Gastrocnemius medialis (tissue), 4 donors: ENCODE measurements at regions of chr1 and their contacts with region 1.

Region 1: GRCh38 chr1:31564134-31564989 is 12.0 kb upstream of the TINAGL1 start:
- DNase-seq: peak in 1 of 2 donors; percentile 28
- ATAC-seq: peak; percentile 65 to 82
- H3K4me3 ChIP-seq: no peak overlapping the region
- H3K27ac ChIP-seq: no peak overlapping the region
- H3K4me1 ChIP-seq: no peaks in the 10 kb centered on the region
- H3K27me3 ChIP-seq: no peaks in the 10 kb centered on the region
- CTCF ChIP-seq: peak; percentile 86 to 92 (median 89)
- POLR2A ChIP-seq: no peak

Region 2: GRCh38 chr1:30342535-30343141 is 1221.7 kb before region 1 on chr1:
- in situ Hi-C with region 1: no loop called
- intact Hi-C with region 1: no loop called
- DNase-seq: no peak
- ATAC-seq: no peak
- H3K4me3 ChIP-seq: no peak overlapping the region
- H3K27ac ChIP-seq: no peak overlapping the region
- H3K4me1 ChIP-seq: peaks cover 0 to 2% of the 10 kb centered on the region in 2 donors
- H3K27me3 ChIP-seq: peaks cover 11 to 23% (median 19%) of the 10 kb centered on the region in 3 donors
- CTCF ChIP-seq: no peak
- POLR2A ChIP-seq: no peak

Region 3: GRCh38 chr1:31593770-31594632 is 29.6 kb after region 1 on chr1:
- in situ Hi-C with region 1: no loop called
- intact Hi-C with region 1: loop called (anchors 1 kb)
- DNase-seq: peak; percentile 48 to 59
- ATAC-seq: peak; percentile 81 to 87
- H3K4me3 ChIP-seq: no peak overlapping the region
- H3K27ac ChIP-seq: no peak overlapping the region
- H3K4me1 ChIP-seq: no peaks in the 10 kb centered on the region
- H3K27me3 ChIP-seq: peaks cover 0 to 6% (median 3%) of the 10 kb centered on the region in 3 donors
- CTCF ChIP-seq: peak; percentile 68 to 92 (median 77)
- POLR2A ChIP-seq: no peak

Region 4: DNA sequence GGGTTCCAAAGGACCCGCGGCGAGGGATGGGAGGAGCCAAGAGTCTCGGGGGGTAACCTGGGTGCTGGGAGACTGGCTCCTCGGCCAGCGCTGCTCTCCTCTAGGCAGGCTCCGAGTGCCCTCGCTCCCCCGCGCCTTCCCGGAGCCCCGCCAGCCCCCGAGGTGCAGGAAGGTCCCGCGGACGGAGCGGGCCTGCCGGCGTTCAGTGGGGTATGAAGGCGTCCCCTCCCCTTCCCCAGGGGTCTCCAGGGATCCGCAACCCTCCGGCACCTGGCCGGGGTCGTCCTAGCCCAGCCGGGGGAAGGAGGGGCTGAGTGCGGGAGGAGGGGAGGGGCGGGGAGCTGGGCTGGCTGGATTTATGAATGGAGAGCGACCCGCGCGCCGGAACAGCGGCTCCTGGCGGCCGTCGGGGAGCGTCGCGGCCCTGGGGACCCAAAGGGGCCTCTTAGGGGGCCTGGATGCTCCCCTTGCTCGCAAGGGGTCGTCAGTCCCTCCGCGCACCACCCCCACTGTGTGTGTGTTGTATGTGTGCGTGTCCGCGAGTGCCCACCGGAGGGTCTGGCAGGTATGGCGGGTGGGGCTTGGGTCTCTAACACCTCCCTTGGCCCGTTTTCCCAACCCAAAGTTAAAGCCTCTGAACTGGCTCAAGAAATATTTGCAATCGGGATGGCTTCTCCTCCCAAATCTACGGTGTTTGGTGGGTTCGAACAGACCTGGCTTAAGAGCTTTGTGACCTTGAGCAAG is 53.7 kb after region 1 on chr1:
- in situ Hi-C with region 1: no loop called
- intact Hi-C with region 1: loop called (anchors 1 kb)
- DNase-seq: no peak
- ATAC-seq: peak; percentile 39 to 51
- H3K4me3 ChIP-seq: peak overlapping the region; percentile 60 to 76 (median 64)
- H3K27ac ChIP-seq: peak overlapping the region; percentile 8 to 57 (median 34)
- H3K4me1 ChIP-seq: peaks cover 4 to 8% of the 10 kb centered on the region in 2 donors
- H3K27me3 ChIP-seq: peaks cover 20 to 21% (median 20%) of the 10 kb centered on the region in 3 donors
- CTCF ChIP-seq: peak; percentile 53 to 88 (median 81)
- POLR2A ChIP-seq: no peak

Region 5: DNA sequence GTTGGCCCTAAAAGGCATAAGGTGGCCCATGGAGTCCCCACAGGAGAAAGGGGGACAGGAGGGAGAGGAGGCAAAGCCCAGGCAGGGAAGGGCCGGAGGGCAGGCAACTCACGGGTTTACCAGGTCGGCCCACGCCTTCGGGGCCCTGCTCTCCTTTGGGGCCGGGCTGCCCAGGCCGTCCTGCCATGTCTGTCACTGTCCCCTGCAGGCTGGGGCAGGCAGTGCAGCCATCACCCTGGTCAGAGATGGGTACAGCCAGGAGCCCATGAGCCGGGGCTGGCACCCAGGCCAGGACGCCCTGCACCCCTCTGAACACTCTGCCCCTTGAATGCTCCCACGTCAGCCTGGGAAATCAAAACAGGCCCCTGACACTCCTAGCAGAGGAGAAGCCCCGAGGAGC is 119.6 kb after region 1 on chr1:
- in situ Hi-C with region 1: no loop called
- intact Hi-C with region 1: no loop called
- DNase-seq: no peak
- ATAC-seq: peak in 1 of 2 donors; percentile 30
- H3K4me3 ChIP-seq: no peak overlapping the region
- H3K27ac ChIP-seq: no peak overlapping the region
- H3K4me1 ChIP-seq: no peaks in the 10 kb centered on the region
- H3K27me3 ChIP-seq: no peaks in the 10 kb centered on the region
- CTCF ChIP-seq: peak in 4 of 5 experiments; percentile 32 to 59 (median 52)
- POLR2A ChIP-seq: no peak